OCI-LY7 (cell line): ENCODE measurements at regions of chr9 and their contacts with region 1.

Region 1: GRCh38 chr9:134135343-134136118 is at the start of gene WDR5:
- DNase-seq: peak; percentile 94
- H3K4me3 ChIP-seq: peak within 1 kb of the TSS; percentile 100
- H3K27ac ChIP-seq: peak within 1 kb of the TSS; percentile 82
- H3K4me1 ChIP-seq: peaks cover 33% of the 10 kb centered on the region
- CTCF ChIP-seq: peak; percentile 52
- total RNA-seq, gene WDR5: 27.5 and 32.5 TPM in 2 replicates

Region 2: DNA sequence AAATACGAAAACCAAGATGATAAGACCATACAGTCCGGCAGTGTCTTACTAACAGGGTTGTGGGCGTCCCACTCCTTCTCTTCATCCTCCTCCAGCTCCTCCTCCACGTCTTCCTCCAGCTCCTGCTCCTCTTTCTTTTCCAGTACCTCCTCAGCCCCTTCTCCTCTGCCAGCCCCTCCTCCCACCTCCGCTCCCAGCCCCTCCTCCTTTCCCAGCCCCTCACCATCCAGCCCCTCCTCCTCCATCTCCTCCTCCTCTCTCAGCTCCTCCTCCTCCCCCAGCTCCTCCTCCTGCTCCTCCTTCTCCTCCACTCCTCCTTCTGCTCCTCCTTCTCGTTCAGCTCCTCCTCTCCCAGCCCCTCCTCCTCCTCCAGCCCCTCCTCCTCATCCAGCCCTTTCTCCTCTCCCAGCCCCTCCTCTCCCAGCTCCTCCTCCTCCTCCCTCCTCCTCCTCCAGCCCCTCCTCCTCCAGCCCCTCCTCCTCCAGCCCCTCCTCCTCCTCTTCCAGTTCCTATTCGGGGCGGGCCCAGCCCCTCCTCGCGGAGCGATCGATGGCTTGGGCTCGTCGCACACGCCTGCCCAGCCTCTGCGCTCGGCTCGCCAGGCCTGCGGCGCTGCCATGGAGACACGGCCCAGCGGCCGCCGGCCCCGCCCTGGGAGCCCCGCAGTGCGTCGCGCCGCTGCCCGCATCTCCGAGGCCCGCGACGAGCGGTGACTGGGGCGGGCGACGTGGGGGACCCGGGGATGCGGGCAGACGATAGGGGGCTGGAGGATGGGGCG is 110.5 kb before region 1 on chr9 and contains the start of gene BRD3OS:
- CTCF ChIA-PET with region 1: no interaction called
- POLR2A ChIA-PET with region 1: interaction called, 4 read pairs
- intact Hi-C with region 1: loop called (anchors 5 kb)
- DNase-seq: peak; percentile 98
- H3K4me3 ChIP-seq: peak within 1 kb of the TSS; percentile 83
- H3K27ac ChIP-seq: peak within 1 kb of the TSS; percentile 54
- H3K4me1 ChIP-seq: peaks cover 12% of the 10 kb centered on the region
- CTCF ChIP-seq: no peak
- total RNA-seq, gene BRD3OS: 12.4 and 21.6 TPM in 2 replicates

Region 3: GRCh38 chr9:134163353-134164196 is 28.0 kb after region 1 on chr9:
- CTCF ChIA-PET with region 1: no interaction called
- POLR2A ChIA-PET with region 1: interaction called, 5 read pairs
- intact Hi-C with region 1: loop called (anchors 1 kb)
- DNase-seq: no peak
- H3K4me3 ChIP-seq: peak overlapping the region; percentile 41
- H3K27ac ChIP-seq: no peak overlapping the region
- H3K4me1 ChIP-seq: peaks cover 16% of the 10 kb centered on the region
- CTCF ChIP-seq: no peak